Prostate gland (tissue), 2 donors: ENCODE measurements at regions of chr11 and their contacts with region 1.

Region 1: GRCh38 chr11:14643697-14644225 is at the start of gene PDE3B:
- DNase-seq: peak; percentile 88
- H3K4me3 ChIP-seq: peak within 1 kb of the TSS; percentile 87 to 89
- H3K27ac ChIP-seq: peak within 1 kb of the TSS; percentile 90 to 91
- H3K4me1 ChIP-seq: peaks cover 2% of the 10 kb centered on the region
- H3K27me3 ChIP-seq: no peaks in the 10 kb centered on the region
- CTCF ChIP-seq: peak in 2 of 4 experiments; percentile 11 to 26
- POLR2A ChIP-seq: peak; percentile 60
- total RNA-seq, gene PDE3B: 21.1 to 23.4 TPM

Region 2: DNA sequence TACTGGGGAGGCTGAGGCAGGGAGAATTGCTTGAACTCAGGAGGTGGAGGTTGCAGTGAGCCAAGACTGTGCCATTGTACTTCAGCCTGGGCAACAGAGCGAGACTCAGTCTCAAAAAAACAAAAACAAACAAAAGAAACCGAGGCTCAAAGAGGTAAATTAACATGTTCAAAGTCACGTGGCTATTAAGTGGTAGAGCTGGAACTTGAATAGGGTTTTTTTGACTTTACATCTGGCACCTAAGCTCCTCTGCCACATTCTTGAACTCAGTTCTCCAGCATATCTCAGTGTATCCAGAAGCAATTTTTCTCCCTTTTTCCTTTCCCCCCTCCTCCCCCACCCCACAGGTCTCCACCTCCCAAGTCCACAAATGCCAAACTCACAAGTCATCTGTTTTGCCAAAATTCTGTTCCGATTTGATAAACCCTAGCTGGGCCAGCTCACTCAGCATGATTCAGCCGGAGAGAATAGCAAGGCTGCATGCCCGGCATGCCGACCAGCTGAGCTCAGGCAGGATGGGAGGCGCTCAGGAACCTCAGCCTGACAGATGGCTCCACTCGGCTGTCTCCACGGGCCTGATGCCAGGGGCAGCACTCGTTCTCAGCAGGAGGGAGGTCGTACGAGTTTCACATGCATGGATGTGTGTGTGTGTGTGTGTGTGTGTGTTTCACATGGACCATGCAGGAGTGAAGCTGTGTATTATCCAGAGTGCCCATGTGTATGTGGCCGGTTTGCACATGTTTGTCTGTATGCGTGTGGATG is 221.5 kb before region 1 on chr11:
- intact Hi-C with region 1: no loop called
- DNase-seq: peak; percentile 22
- H3K4me3 ChIP-seq: no peak overlapping the region
- H3K27ac ChIP-seq: peak overlapping the region in 1 of 2 donors; percentile 18
- H3K4me1 ChIP-seq: no peaks in the 10 kb centered on the region
- H3K27me3 ChIP-seq: no peaks in the 10 kb centered on the region
- CTCF ChIP-seq: no peak
- POLR2A ChIP-seq: no peak

Region 3: GRCh38 chr11:14537134-14537599 is 106.6 kb before region 1 on chr11:
- intact Hi-C with region 1: loop called (anchors 5 kb)
- DNase-seq: no peak
- H3K4me3 ChIP-seq: no peak overlapping the region
- H3K27ac ChIP-seq: no peak overlapping the region
- H3K4me1 ChIP-seq: no peaks in the 10 kb centered on the region
- H3K27me3 ChIP-seq: no peaks in the 10 kb centered on the region
- CTCF ChIP-seq: peak; percentile 39 to 73 (median 70)
- POLR2A ChIP-seq: no peak

Region 4: GRCh38 chr11:14673824-14674405 is 30.2 kb after region 1 on chr11:
- intact Hi-C with region 1: no loop called
- DNase-seq: no peak
- H3K4me3 ChIP-seq: no peak overlapping the region
- H3K27ac ChIP-seq: no peak overlapping the region
- H3K4me1 ChIP-seq: no peaks in the 10 kb centered on the region
- H3K27me3 ChIP-seq: no peaks in the 10 kb centered on the region
- CTCF ChIP-seq: no peak
- POLR2A ChIP-seq: no peak

Region 5: DNA sequence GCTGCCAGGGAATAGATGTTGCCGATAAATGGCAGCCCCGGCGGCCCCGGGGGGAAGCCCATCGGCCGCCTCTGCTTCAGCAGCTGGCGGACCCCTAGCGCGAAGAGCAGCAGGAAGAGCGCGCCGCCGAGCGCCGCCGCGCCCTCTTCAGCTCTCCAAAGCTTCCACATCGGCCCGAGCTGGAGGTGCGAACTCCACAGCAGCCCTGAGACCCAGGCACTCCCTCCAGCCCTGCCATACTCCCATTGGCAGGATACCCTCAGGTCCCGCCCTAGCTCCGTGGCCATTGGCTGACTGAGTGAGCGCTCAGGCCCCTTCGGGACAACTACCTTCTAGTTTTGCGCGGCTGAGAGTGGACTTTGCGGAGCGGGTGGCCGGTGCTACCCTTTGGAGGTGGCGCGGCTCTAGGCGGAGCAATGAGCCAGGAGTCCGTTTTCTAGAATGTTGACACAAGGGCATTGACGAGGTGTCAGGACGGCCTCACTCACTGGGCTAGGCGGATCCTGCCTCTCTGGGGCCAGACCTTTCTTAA is 248.3 kb after region 1 on chr11 and contains the start of gene CYP2R1:
- intact Hi-C with region 1: loop called (anchors 10 kb)
- DNase-seq: peak; percentile 97
- H3K4me3 ChIP-seq: peak within 1 kb of the TSS; percentile 37 to 79
- H3K27ac ChIP-seq: peak within 1 kb of the TSS; percentile 76 to 96
- H3K4me1 ChIP-seq: peaks cover 7% of the 10 kb centered on the region
- H3K27me3 ChIP-seq: no peaks in the 10 kb centered on the region
- CTCF ChIP-seq: no peak
- POLR2A ChIP-seq: peak; percentile 73
- total RNA-seq, gene CYP2R1: 21.1 to 26.6 TPM